Activated T-helper 2 cell treated with anti-CD3 and anti-CD28 coated beads, Interferon-gamma antibody, Interleukin-2, Interleukin-4, amounts not matched to agents 10 μg/mL and 5 μg/mL and 100 μg/mL, durations not matched to agents 14 hours and 24 hours and 36 hours (primary cell): ENCODE measurements at regions of chr21 and their contacts with region 1.

Region 1: GRCh38 chr21:32403201-32403777 is 9.2 kb upstream of the EVA1C start:
- DNase-seq: peak; percentile 24
- H3K4me3 Mint-ChIP-seq: no peak overlapping the region
- H3K27ac Mint-ChIP-seq: no peak overlapping the region
- H3K4me1 Mint-ChIP-seq: peaks cover 6% of the 10 kb centered on the region
- H3K27me3 Mint-ChIP-seq: peaks cover 19% of the 10 kb centered on the region

Region 2: DNA sequence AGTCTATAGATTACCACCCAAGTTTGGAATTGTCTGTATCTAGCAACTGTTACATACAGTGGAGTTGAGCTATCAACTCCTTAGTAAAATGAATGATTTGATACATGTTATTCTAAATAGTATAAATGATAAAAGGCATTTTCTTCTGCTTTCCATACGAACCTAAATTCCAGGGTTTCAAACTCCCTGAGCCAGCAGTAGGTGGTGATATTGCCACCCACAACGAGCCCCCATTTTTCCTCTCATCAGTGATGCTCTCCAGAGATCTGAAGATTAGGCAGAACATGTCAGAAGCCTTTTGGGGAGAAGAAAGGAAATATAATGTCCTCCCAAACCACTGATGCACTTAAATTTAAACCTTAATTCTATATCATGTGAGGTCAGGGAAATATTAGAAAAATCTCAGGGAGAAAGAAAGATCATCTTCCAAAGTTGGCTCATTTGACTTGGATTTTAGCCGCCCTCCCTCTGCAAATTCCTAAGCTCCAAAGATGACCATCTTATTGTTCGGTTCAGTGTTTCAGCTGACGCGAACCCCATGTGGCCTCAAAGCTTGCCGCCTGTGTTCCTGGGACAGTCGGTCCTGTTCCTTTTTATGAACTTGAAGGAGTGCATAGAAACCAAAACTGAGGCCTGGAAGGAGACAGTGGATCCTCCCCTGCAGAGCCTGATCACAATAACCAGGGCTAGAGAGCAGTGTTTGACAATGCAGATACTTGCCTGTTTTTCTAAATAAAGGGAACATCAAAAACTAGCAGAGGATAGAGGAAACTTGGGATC is 11.5 kb after region 1 on chr21:
- intact Hi-C with region 1: no loop called
- DNase-seq: no peak
- H3K4me3 Mint-ChIP-seq: no peak overlapping the region
- H3K27ac Mint-ChIP-seq: no peak overlapping the region
- H3K4me1 Mint-ChIP-seq: peaks cover 15% of the 10 kb centered on the region
- H3K27me3 Mint-ChIP-seq: no peaks in the 10 kb centered on the region

Region 3: DNA sequence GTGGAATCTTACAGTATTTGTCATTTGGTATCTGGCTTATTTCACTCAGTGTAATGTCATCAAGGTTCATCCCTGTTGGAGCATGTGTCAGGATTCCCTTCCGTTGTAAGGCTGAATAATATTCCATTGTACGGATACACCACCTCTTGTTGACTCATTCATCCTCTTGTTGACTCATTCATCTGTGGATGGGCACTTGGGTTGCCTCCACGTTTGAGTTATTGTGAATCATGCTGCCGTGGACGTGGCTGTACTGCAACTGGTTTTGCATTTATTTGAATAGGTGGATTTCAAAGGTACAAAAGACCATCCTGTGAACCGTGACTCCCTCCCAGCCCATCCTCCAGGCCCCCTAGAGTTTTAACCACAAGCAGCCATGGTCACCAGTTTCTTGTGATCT is 193.9 kb after region 1 on chr21:
- intact Hi-C with region 1: loop called (anchors 1 kb)
- DNase-seq: no peak
- H3K4me3 Mint-ChIP-seq: no peak overlapping the region
- H3K27ac Mint-ChIP-seq: no peak overlapping the region
- H3K4me1 Mint-ChIP-seq: peaks cover 3% of the 10 kb centered on the region
- H3K27me3 Mint-ChIP-seq: no peaks in the 10 kb centered on the region